BJ (cell line): ENCODE measurements at regions of chr1 and their contacts with region 1.

Region 1: DNA sequence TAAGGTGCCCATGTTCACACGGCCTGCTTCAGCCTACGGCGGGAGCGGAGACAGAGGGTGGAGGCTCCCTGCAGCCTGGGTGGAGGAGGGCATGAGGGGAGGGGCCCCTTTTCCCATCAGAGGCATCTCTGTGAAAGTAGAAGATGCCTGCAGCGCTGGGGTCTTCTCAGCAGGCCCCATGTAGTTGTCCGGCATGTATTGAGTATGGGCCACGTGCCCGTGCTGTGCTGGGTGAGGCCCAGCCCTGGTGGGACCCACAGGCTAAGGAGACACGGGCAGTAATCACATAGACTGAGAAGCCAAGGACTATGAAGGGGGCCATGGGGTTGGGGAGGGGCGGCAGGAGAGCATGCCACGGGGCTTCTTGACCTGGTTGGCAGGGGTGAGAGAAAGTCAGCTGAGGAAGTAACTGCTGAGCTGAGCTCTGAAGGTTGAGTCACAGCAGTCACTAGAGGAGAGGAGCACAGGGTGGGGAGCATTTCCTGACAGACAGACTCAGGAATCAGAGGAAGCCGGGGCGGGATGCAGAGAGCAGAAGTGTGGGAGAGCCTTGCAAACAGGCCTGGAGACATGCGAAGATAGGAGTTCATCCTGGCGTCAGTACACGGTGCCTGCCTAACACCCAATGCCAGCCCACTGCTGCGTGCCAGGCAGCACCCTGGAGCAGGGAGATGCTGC is 21.6 kb downstream of the PSEN2 start:
- DNase-seq: no peak
- H3K4me3 ChIP-seq: no peak overlapping the region
- H3K27me3 ChIP-seq: no peaks in the 10 kb centered on the region
- CTCF ChIP-seq: no peak

Region 2: GRCh38 chr1:226799634-226800281 is 92.2 kb before region 1 on chr1:
- CTCF ChIA-PET with region 1: no interaction called
- POLR2A ChIA-PET with region 1: interaction called, 22 read pairs
- DNase-seq: no peak
- H3K4me3 ChIP-seq: no peak overlapping the region
- H3K27me3 ChIP-seq: peaks cover 4% of the 10 kb centered on the region
- CTCF ChIP-seq: no peak